PC-9 (cell line): ENCODE measurements at regions of chr12 and their contacts with region 1.

Region 1: DNA sequence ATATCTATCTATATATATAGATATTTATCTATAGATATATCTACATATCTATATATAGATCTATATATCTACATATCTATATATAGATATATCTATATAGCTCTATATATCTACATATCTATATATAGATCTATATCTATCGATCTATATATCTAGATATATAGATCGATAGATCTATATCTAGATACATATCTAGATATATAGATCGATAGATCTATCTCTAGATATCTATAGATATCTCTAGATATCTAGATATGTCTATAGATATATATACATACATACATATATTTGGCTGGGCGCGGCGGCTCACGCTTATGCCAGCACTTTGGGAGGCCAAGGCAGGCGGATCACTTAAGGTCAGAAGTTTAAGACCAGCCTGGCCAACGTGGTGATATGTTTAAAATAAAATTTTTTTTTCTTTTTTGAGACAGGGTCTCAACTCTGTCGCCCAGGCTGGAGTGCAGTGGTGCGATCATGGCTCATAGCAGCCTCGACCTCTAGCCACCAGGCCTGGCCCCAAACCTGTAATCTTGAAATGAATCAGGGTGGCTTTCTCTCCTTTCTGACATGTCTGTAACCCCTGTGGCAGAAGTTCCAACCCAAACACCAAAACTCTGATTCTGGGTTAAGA is 18.1 kb downstream of the ARPC3 start:
- DNase-seq: no peak
- H3K4me3 ChIP-seq: no peak overlapping the region; the same call in 1 of the 2 replicates
- H3K27ac ChIP-seq: no peak overlapping the region
- H3K4me1 ChIP-seq: no peaks in the 10 kb centered on the region; the same call in 1 of the 2 replicates
- H3K27me3 ChIP-seq: no peaks in the 10 kb centered on the region
- CTCF ChIP-seq: no peak

Region 2: DNA sequence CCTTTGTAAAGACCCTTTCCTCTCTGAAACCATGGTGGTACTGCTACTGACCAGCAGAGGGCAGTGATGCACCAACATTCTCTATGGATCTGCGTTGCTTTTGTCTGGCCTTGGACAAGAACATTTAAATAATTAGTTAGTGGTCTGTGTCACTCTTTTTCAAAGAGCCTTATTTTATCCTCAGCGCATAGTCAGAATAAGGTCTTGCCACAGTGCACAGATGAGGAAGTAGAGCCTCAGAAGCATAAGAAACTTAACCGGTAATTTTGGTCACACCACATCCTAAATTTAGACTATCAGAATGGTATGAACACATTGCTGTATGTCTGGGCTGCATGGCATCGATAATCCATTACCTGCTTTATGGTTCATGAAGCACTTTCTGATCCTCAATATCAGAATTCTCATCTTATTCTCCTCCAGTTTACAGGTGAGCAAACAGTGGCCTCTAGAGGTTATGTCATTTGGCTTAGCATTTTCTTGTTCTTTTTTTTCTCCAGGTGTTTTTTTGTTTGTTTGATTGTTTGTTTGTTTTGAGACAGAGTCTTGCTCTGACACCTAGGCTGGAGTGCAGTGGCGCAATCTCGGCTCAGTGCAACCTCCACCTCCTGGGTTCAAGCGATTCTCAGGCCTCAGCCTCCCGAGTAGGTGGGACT is 331.6 kb before region 1 on chr12:
- CTCF ChIA-PET with region 1: interaction called, 3 read pairs
- POLR2A ChIA-PET with region 1: interaction called, 13 read pairs
- intact Hi-C with region 1: loop called (anchors 1 kb)
- DNase-seq: peak; percentile 53 to 60
- H3K4me3 ChIP-seq: no peak overlapping the region
- H3K27ac ChIP-seq: no peak overlapping the region
- H3K4me1 ChIP-seq: no peaks in the 10 kb centered on the region
- H3K27me3 ChIP-seq: no peaks in the 10 kb centered on the region
- CTCF ChIP-seq: peak; percentile 97

Region 3: DNA sequence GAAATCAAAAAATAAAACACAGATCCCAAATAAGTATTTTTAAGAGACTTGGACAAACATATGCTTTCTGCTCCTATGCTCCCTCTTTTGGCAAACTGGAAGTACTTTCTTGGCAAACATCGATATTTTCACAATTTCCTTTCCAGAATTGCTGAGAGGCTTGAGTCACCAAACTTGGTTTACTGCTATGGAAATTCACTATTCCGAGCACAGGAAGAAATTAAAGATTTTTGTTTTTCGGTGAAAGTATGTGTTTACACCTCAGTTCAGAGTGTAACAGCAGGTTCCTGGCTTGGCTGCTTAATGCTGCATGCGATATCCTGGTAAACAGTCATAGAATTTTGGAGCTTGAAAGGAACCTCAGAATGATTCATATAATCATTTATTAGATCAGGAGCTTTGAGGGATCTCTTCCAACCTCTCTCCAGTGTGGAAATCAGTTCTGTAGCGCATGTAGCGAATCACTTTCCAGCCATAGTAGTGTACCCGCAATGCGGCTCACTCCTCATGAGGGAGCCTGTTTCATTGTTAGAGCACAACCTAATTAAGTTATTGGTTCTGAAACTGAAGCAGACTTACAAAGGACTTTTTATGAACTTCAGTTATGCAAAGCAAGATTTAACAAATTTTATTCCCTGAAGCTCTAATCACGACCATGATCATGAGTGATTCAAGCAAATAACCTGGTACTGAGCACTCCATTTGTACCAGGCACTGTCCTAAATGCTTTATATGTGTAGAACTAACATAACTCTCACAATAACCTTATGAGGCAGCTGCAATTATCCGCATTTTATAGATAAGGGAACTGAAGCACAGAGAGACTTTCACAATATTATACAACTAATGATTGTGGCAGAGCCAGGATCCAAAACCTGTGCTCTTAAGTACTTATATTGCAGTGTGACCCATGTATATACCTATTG is 207.4 kb before region 1 on chr12:
- CTCF ChIA-PET with region 1: no interaction called
- POLR2A ChIA-PET with region 1: interaction called, 22 read pairs
- intact Hi-C with region 1: no loop called
- DNase-seq: peak in 1 of 2 experiments; percentile 64
- H3K4me3 ChIP-seq: peak overlapping the region; percentile 10; the same call in 1 of the 2 replicates
- H3K27ac ChIP-seq: peak overlapping the region; percentile 79
- H3K4me1 ChIP-seq: peaks cover 34% of the 10 kb centered on the region
- H3K27me3 ChIP-seq: no peaks in the 10 kb centered on the region
- CTCF ChIP-seq: peak; percentile 46

Region 4: GRCh38 chr12:110338754-110339153 is 93.3 kb before region 1 on chr12:
- CTCF ChIA-PET with region 1: interaction called, 11 read pairs
- POLR2A ChIA-PET with region 1: no interaction called
- intact Hi-C with region 1: no loop called
- DNase-seq: no peak
- H3K4me3 ChIP-seq: no peak overlapping the region
- H3K27ac ChIP-seq: peak overlapping the region; percentile 34
- H3K4me1 ChIP-seq: peaks cover 26% of the 10 kb centered on the region
- H3K27me3 ChIP-seq: no peaks in the 10 kb centered on the region
- CTCF ChIP-seq: no peak

Region 5: DNA sequence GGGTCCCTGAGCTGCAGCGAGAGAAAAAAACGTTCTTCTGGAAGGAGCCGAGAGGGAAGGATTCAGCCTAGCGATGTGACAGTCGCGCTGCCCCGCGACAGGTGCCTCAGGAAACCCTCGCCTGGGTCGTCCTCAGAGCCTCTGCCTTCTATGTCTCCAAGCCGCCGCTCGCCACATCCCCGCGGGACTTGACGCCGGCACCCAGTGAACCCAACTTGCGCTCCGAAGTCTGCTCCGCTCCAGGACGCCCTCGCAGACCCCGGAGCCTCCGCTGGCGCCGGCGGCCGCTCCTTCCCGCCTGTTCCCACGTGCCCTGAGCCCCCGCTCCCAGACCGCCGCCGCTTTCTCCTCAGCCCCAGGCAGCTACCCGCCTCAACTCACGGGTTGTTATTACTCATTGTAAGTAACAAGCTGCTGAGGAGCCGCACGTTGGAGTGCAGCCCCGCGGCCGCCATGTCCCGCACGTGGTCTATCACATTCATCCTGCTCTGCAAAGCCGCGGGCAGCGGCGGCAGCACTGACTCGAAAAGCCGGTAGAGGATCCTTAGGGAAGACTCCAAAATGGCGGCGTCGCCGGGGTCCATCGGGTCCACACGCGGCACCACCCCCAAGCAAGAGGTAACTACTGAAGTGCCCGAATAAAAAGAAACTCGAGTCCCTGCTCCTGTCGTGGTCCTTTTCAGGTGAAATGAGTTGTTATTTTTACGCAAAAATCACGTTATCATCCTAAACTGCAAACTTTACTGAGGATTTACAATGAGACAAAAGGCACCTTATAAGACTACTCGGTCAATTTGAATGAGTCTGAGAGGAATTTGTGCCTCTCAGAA is 28.7 kb before region 1 on chr12 and contains the start of gene ANAPC7:
- CTCF ChIA-PET with region 1: no interaction called
- POLR2A ChIA-PET with region 1: no interaction called
- intact Hi-C with region 1: loop called (anchors 1 kb)
- DNase-seq: peak; percentile 81 to 87
- H3K4me3 ChIP-seq: peak within 1 kb of the TSS; percentile 91
- H3K27ac ChIP-seq: peak within 1 kb of the TSS; percentile 88
- H3K4me1 ChIP-seq: peaks cover 11% of the 10 kb centered on the region
- H3K27me3 ChIP-seq: no peaks in the 10 kb centered on the region
- CTCF ChIP-seq: 0 out of 2 replicates have a peak, but pooled peaks have one; percentile 4
- total RNA-seq, gene ANAPC7: 48.7 and 52.4 TPM in 2 replicates

Region 6: GRCh38 chr12:110613771-110614684 is 182.0 kb after region 1 on chr12 and contains the start of gene TCTN1:
- CTCF ChIA-PET with region 1: interaction called, 4 read pairs
- POLR2A ChIA-PET with region 1: interaction called, 36 read pairs
- intact Hi-C with region 1: no loop called
- DNase-seq: peak; percentile 88 to 96
- H3K4me3 ChIP-seq: peak within 1 kb of the TSS; percentile 80
- H3K27ac ChIP-seq: no peak within 1 kb of the TSS
- H3K4me1 ChIP-seq: peaks cover 18% of the 10 kb centered on the region
- H3K27me3 ChIP-seq: no peaks in the 10 kb centered on the region
- CTCF ChIP-seq: no peak; the same call in 1 of the 2 replicates
- total RNA-seq, gene TCTN1: 58.3 and 66.8 TPM in 2 replicates

Region 7: GRCh38 chr12:110689281-110690126 is 257.4 kb after region 1 on chr12:
- CTCF ChIA-PET with region 1: no interaction called
- POLR2A ChIA-PET with region 1: no interaction called
- intact Hi-C with region 1: no loop called
- DNase-seq: peak in 1 of 2 experiments; percentile 27
- H3K4me3 ChIP-seq: no peak overlapping the region
- H3K27ac ChIP-seq: no peak overlapping the region
- H3K4me1 ChIP-seq: no peaks in the 10 kb centered on the region
- H3K27me3 ChIP-seq: peaks cover 56% of the 10 kb centered on the region
- CTCF ChIP-seq: no peak

Region 8: DNA sequence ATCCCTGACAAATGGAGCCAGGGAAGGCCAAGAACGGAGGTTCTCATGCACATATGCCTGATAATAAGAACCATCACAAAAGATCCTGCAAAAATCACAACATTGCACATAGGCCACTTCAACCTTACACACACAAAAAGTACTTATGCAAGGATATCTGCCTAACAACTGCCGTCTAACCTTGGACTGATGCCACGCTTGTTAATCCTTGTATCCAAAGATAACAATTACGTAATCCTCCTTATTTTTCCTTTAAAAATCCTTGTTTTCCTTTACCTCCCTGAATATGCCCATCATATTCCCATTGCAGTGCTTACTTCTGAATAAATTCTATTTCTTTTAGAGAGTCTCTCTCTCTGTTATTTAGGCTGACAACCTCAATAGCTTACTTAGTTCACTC is 1521.4 kb after region 1 on chr12:
- CTCF ChIA-PET with region 1: interaction called, 28 read pairs
- POLR2A ChIA-PET with region 1: no interaction called
- intact Hi-C with region 1: no loop called
- DNase-seq: no peak
- H3K4me3 ChIP-seq: no peak overlapping the region
- H3K27ac ChIP-seq: no peak overlapping the region
- H3K4me1 ChIP-seq: no peaks in the 10 kb centered on the region
- H3K27me3 ChIP-seq: no peaks in the 10 kb centered on the region
- CTCF ChIP-seq: no peak